Pancreas (tissue), 10 donors: ENCODE measurements at regions of chr1 and their contacts with region 1.

Region 1: GRCh38 chr1:205528887-205529825 is 24.7 kb downstream of the CDK18 start:
- DNase-seq: peak; percentile 62 to 98 (median 82)
- ATAC-seq: peak; percentile 84 to 94 (median 87)
- H3K4me3 ChIP-seq: peak overlapping the region in 2 of 4 donors; percentile 3 to 26
- H3K27ac ChIP-seq: no peak overlapping the region
- H3K4me1 ChIP-seq: no peaks in the 10 kb centered on the region
- H3K27me3 ChIP-seq: no peaks in the 10 kb centered on the region
- CTCF ChIP-seq: peak; percentile 89 to 97 (median 93)

Region 2: DNA sequence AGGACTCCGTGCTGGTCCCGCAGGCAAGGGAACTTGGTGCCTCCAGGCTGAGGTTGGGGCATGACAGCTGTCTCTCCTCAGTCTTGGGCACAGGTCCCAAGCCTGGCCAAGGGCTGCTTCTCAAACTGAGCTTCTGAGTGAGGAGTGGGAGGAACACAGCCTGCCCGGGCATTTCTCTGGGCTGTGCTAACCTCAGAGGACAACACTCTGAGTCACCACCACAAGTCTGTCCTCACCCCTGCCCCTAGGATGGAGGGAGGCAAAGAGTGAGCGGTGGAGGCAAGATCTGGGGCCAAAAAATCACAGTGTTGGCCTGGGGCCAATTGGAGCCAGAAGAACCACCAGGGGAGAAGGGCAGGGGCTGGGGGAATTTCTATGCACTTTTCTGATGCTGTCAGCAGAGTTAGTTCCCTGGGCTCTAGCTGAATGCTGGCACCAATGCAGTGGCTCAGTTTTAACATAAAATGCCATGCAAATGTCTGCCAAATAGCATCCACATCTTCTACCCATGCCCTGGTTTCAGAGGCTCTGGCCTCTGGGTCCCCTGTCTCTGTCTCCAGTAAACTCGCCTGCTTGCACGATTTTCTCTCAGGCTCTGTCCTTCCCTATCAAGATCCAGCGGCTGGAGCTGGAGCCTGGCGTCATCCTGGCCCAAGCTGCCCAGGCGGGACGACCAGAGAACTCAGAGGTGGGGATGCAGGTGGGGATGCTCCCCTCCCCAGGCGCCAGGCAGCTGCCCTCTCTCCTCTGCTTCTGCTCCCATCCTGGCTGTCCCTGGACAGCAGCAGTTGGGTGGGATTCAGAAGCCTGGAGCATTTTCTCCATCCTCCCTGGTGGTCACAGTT is 35.7 kb before region 1 on chr1:
- intact Hi-C with region 1: loop called in 2 of 3 experiments (anchors 2 to 5 kb)
- DNase-seq: peak in 1 of 6 donors; percentile 26
- ATAC-seq: peak in 3 of 4 donors; percentile 49 to 73 (median 70)
- H3K4me3 ChIP-seq: no peak overlapping the region
- H3K27ac ChIP-seq: peak overlapping the region in 1 of 4 donors; percentile 23
- H3K4me1 ChIP-seq: no peaks in the 10 kb centered on the region
- H3K27me3 ChIP-seq: no peaks in the 10 kb centered on the region
- CTCF ChIP-seq: no peak

Region 3: GRCh38 chr1:205658943-205659581 is 129.9 kb after region 1 on chr1:
- intact Hi-C with region 1: loop called in 2 of 3 experiments (anchors 5 kb)
- DNase-seq: peak; percentile 68 to 92 (median 86)
- ATAC-seq: peak; percentile 80 to 95 (median 92)
- H3K4me3 ChIP-seq: no peak overlapping the region
- H3K27ac ChIP-seq: no peak overlapping the region
- H3K4me1 ChIP-seq: no peaks in the 10 kb centered on the region
- H3K27me3 ChIP-seq: no peaks in the 10 kb centered on the region
- CTCF ChIP-seq: peak; percentile 70 to 90 (median 80)